ENCODE measurements at regions of chr2 and their contacts with region 1.

Region 1: GRCh38 chr2:202643012-202643858 is 8.5 kb downstream of the FAM117B start:
- DNase-seq: peak in 7 of 10 donors; percentile 20 to 87 (median 75)
- ATAC-seq: peak; percentile 70 to 79
- H3K4me3 Mint-ChIP-seq: peak overlapping the region in 8 of 10 donors; percentile 74 to 89 (median 78)
- H3K27ac Mint-ChIP-seq: peak overlapping the region in 7 of 10 donors; percentile 87 to 95 (median 91)
- H3K4me1 Mint-ChIP-seq: peaks cover 26 to 73% (median 62%) of the 10 kb centered on the region in 4 donors
- H3K27me3 Mint-ChIP-seq: no peaks in the 10 kb centered on the region

Region 2: GRCh38 chr2:202460119-202460518 is 183.1 kb before region 1 on chr2:
- POLR2A ChIA-PET with region 1: no interaction called
- DNase-seq: no peak
- ATAC-seq: no peak
- H3K4me3 Mint-ChIP-seq: no peak overlapping the region
- H3K27ac Mint-ChIP-seq: no peak overlapping the region
- H3K4me1 Mint-ChIP-seq: peaks cover 0 to 2% (median 0%) of the 10 kb centered on the region in 4 donors
- H3K27me3 Mint-ChIP-seq: no peaks in the 10 kb centered on the region

Region 3: DNA sequence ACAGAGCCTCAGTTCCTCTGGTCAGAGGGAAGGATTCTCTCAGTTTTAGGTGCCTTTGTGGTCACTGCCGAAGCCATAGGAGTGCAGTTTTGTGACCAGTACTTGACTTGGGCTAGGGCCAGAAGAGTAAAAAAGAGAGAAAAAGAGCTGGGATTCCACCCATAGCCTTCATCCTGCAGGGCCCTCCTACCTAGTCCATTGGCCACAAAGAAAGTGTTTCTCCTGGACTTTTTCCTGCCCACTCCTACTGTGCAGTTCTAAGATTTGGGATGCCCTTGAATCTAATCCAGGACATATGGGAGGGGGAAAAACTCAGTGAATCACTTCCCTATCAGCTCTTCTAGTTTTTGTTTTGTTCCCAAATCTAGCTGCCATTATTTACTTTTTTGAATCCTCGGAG is 17.6 kb after region 1 on chr2:
- POLR2A ChIA-PET with region 1: interaction called, 13 read pairs
- DNase-seq: no peak
- ATAC-seq: no peak
- H3K4me3 Mint-ChIP-seq: peak overlapping the region in 7 of 10 donors; percentile 8 to 65 (median 27)
- H3K27ac Mint-ChIP-seq: peak overlapping the region in 9 of 10 donors; percentile 31 to 96 (median 59)
- H3K4me1 Mint-ChIP-seq: peaks cover 36 to 88% (median 81%) of the 10 kb centered on the region in 4 donors
- H3K27me3 Mint-ChIP-seq: no peaks in the 10 kb centered on the region

Region 4: DNA sequence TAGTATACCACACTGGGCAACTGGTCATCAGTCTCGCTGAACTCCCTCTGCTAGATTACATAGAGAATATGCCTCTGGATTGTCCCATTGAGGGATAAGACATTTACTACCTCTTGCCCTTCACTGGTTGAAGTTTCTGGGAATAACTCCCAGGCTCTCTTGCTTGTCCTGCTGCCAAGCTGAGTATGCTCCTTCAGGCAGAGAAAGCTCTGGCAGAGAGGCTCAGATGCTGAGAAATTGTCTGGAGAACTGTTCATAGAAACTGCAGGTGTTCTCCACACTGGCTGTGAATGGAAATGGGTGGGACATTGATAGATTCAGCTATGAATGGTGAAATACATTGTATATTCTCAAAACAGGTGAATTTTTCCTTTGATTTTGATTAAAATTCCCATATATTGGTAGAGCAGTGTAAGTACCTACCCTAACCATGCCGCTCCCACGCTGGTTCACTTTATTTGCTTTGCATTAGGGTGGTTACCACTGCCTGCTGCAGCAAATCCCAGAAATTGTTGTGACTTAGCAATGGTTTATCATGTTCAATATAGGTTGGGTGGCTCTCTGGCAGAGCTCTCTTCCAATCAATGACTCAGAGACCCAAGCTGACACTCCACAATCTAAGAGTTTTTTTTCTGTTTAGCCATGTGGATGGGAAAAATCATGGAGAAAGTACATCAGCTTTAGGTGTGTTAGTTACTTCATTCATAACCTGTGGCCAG is 28.2 kb after region 1 on chr2:
- POLR2A ChIA-PET with region 1: interaction called, 46 read pairs
- DNase-seq: no peak
- ATAC-seq: no peak
- H3K4me3 Mint-ChIP-seq: peak overlapping the region in 7 of 10 donors; percentile 8 to 78 (median 34)
- H3K27ac Mint-ChIP-seq: peak overlapping the region in 8 of 10 donors; percentile 46 to 96 (median 81)
- H3K4me1 Mint-ChIP-seq: peaks cover 32 to 86% (median 81%) of the 10 kb centered on the region in 4 donors
- H3K27me3 Mint-ChIP-seq: no peaks in the 10 kb centered on the region

Region 5: DNA sequence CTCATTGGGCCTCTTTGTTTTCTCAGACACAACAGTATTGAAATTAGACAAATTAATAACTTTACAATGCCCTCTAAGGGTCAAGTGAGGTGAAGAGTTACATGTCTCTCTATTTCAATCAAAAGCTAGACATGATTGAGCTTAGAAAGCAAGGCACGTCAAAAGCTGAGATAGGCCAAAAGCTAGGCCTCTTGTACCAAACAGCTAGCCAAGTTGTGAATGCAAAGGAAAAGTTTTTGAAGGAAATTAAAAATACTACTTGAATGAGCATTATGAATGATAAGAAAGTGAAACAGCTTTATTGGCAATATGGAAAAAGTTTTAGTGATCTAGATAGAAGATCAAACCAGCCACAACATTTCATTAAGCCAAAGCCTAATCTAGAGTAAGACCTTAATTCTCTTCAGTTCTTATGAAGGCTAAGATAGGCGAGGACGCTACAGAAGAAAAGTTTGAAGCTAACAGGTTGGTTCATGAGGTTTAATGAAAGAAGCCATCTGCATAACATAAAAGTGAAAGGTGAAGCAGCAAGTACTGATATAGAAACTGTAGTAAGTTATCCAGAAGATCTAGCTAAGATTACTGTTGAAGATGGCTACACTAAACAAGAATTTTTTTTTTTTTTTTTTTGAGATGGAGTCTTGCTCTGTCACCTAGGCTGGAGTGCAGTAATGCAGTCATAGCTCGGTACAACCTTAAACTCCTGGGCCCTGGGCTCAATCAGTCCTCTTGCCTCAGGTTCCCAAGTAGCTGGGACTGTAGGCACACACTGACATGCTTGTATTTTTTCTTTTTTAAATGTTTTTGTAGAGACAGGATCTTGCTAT is 57.1 kb after region 1 on chr2:
- POLR2A ChIA-PET with region 1: no interaction called
- DNase-seq: peak in 2 of 10 donors; percentile 5 to 16
- ATAC-seq: peak; percentile 66 to 67
- H3K4me3 Mint-ChIP-seq: peak overlapping the region in 9 of 10 donors; percentile 0 to 64 (median 43)
- H3K27ac Mint-ChIP-seq: peak overlapping the region; percentile 65 to 90 (median 78)
- H3K4me1 Mint-ChIP-seq: peaks cover 27 to 64% (median 57%) of the 10 kb centered on the region in 4 donors
- H3K27me3 Mint-ChIP-seq: no peaks in the 10 kb centered on the region

Measured in naive thymus-derived CD8-positive, alpha-beta T cell (primary cell).